ENCODE measurements at regions of chr2 and their contacts with region 1.

Region 1: DNA sequence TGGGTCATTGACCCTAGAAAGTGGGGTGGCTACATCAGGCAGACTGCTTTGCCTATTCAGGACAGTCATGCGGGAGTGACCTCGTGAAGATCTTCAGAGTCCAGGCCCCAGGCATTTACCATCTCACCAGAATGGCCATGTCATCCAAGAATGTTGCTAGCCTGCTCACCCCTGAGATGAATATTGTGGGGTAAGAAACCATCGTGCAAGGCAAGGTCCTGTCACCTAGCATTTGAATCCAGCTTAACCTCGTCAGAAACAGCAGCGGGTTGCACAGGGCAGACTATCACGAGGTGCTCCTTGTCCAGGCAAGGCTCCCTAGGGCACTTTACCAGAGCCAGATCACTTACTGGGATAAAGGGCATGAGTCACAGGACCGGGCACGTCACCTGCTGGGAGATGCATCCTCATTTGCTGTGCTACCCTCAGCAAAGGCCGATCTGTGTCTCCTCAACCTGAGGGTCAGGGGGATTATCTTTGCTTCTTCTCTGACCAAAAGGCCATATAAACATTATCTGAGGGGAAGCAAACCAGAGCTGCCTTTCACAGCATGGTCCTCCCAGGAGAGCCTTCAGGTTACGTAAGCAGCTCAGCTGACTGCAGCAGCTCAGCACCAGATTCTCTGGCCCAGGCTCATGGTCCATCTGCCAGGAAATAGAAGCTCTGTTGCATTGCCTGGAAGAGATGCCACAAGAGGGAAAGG is 162.4 kb downstream of the ACKR3 start:
- DNase-seq: no peak
- ATAC-seq: no peak
- H3K4me3 Mint-ChIP-seq: no peak overlapping the region
- H3K27ac Mint-ChIP-seq: no peak overlapping the region
- H3K4me1 Mint-ChIP-seq: no peaks in the 10 kb centered on the region
- H3K27me3 Mint-ChIP-seq: peaks cover 3% of the 10 kb centered on the region
- CTCF ChIP-seq: no peak

Region 2: GRCh38 chr2:236694146-236694888 is 37.7 kb before region 1 on chr2:
- CTCF ChIA-PET with region 1: no interaction called
- POLR2A ChIA-PET with region 1: no interaction called
- intact Hi-C with region 1: loop called (anchors 2 kb)
- DNase-seq: no peak
- ATAC-seq: no peak
- H3K4me3 Mint-ChIP-seq: no peak overlapping the region
- H3K27ac Mint-ChIP-seq: no peak overlapping the region
- H3K4me1 Mint-ChIP-seq: no peaks in the 10 kb centered on the region
- H3K27me3 Mint-ChIP-seq: peaks cover 5% of the 10 kb centered on the region
- CTCF ChIP-seq: no peak

Measured in activated CD8-positive, alpha-beta T cell treated with anti-CD3 and anti-CD28 coated beads for 36 hours (primary cell).